ENCODE measurements at regions of chr2 and their contacts with region 1.

Region 1: DNA sequence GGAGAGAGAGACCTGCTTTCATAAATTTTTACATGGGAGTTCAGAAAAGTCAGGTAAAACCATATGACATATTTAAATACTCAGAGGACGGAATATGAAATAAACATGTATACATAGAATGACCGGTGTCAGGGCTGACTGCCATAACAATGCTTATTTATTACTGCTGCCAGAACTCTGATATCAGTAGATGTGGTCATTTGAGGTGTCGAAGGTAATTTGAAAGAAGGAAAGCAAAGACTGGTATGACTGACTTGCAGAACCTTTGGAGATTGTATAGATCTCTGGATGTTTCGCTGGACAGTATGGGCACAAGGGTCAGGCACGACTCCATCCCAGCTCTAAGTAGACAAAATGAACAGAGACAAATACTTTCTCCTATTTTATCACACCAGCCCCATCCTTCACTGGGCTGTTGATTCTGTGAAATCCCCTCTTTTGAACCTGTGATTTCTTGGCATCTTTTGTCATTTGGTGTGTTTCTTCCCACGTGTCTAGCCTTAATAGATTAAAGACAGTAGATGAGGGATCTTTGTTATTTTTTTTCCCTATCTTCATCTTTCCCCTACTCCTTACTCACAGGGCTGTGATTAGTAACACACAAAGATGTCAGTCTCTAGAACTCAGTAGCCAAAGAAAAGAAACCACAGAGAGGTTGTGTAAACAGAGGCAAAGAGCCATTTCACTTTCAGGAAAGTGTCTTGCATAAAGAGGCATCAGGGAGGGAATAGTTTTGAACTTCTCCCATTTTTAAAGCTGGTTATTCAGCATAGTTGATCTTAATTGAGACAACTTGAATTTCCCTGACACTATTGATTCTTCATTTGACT is 61.6 kb downstream of the ICOS start:
- DNase-seq: peak; percentile 57
- H3K4me3 Mint-ChIP-seq: peak overlapping the region; percentile 55
- H3K27ac Mint-ChIP-seq: peak overlapping the region; percentile 69
- H3K4me1 Mint-ChIP-seq: peaks cover 72% of the 10 kb centered on the region
- H3K27me3 Mint-ChIP-seq: no peaks in the 10 kb centered on the region

Region 2: GRCh38 chr2:203718087-203718486 is 280.1 kb before region 1 on chr2:
- intact Hi-C with region 1: loop called (anchors 5 kb)
- DNase-seq: peak; percentile 92
- H3K4me3 Mint-ChIP-seq: peak overlapping the region; percentile 66
- H3K27ac Mint-ChIP-seq: peak overlapping the region; percentile 99
- H3K4me1 Mint-ChIP-seq: peaks cover 91% of the 10 kb centered on the region
- H3K27me3 Mint-ChIP-seq: no peaks in the 10 kb centered on the region

Region 3: GRCh38 chr2:203730076-203730729 is 268.0 kb before region 1 on chr2:
- intact Hi-C with region 1: loop called (anchors 5 kb)
- DNase-seq: peak; percentile 71
- H3K4me3 Mint-ChIP-seq: peak overlapping the region; percentile 71
- H3K27ac Mint-ChIP-seq: peak overlapping the region; percentile 96
- H3K4me1 Mint-ChIP-seq: peaks cover 79% of the 10 kb centered on the region
- H3K27me3 Mint-ChIP-seq: no peaks in the 10 kb centered on the region

Region 4: DNA sequence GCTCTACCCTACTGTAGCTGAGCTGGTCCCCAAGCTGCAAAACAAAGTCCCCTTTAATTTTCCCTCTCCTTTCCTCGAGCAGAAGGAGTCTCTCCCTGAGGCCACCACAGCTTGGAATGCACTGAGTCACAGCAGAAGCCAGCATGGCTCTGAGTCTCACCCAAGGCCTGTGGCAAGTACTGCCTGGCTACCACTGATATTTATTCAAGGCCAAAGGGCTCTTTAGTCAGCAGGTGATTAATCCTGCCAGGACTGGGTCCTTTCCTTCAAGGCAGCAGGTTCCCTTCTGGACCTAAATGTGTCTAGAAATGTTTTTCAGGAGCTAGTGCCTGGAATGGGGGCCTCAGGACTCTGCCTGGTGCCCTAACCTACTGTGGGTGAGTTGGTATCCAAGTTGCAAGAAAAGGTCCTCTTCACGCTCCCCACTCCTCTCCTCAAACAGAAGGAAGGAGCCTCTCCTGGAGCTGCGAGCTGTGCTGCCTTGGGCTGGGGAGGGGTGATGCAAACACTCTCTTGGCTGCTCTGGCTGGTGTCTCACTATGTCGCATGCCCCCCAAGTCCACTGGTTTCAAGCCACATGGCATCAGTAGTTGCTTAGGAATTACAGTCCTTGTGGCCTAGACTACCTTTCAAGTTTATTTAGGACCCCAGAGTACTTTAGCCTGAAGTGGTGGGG is 238.4 kb before region 1 on chr2:
- intact Hi-C with region 1: no loop called
- DNase-seq: peak; percentile 45
- H3K4me3 Mint-ChIP-seq: no peak overlapping the region
- H3K27ac Mint-ChIP-seq: peak overlapping the region; percentile 32
- H3K4me1 Mint-ChIP-seq: peaks cover 51% of the 10 kb centered on the region
- H3K27me3 Mint-ChIP-seq: no peaks in the 10 kb centered on the region

Region 5: GRCh38 chr2:203887677-203888076 is 110.5 kb before region 1 on chr2:
- intact Hi-C with region 1: loop called (anchors 2 kb)
- DNase-seq: no peak
- H3K4me3 Mint-ChIP-seq: no peak overlapping the region
- H3K27ac Mint-ChIP-seq: no peak overlapping the region
- H3K4me1 Mint-ChIP-seq: peaks cover 51% of the 10 kb centered on the region
- H3K27me3 Mint-ChIP-seq: no peaks in the 10 kb centered on the region

Region 6: DNA sequence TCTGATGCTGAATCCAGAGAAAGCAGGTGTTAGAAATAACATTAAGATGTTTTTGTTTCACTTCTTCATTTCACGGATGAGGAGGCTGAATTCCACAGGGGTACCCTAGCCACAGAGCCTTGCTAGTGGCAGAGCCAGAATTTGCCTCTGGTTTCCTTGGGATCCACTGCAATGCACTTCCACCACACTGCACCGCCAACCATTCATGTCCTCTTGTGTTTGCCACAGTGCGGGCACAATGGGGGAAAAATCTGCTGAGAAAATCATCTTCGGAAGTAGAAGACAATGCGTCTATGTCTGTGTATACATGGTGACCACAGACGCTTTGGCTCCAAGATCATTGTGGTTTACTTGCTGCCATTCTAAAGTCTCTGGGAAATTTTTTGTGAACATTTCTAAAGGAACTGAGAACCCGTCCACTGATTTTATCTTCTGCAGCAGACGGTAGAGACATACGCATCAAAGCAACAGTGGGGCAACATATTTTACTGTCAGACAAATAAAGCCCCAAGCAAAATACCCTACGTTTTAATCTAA is 46.8 kb before region 1 on chr2:
- intact Hi-C with region 1: loop called (anchors 1 kb)
- DNase-seq: peak; percentile 84
- H3K4me3 Mint-ChIP-seq: peak overlapping the region; percentile 69
- H3K27ac Mint-ChIP-seq: peak overlapping the region; percentile 84
- H3K4me1 Mint-ChIP-seq: peaks cover 70% of the 10 kb centered on the region
- H3K27me3 Mint-ChIP-seq: no peaks in the 10 kb centered on the region

Region 7: GRCh38 chr2:203972066-203972465 is 26.1 kb before region 1 on chr2:
- intact Hi-C with region 1: loop called (anchors 1 kb)
- DNase-seq: no peak
- H3K4me3 Mint-ChIP-seq: no peak overlapping the region
- H3K27ac Mint-ChIP-seq: no peak overlapping the region
- H3K4me1 Mint-ChIP-seq: peaks cover 13% of the 10 kb centered on the region
- H3K27me3 Mint-ChIP-seq: no peaks in the 10 kb centered on the region

Region 8: DNA sequence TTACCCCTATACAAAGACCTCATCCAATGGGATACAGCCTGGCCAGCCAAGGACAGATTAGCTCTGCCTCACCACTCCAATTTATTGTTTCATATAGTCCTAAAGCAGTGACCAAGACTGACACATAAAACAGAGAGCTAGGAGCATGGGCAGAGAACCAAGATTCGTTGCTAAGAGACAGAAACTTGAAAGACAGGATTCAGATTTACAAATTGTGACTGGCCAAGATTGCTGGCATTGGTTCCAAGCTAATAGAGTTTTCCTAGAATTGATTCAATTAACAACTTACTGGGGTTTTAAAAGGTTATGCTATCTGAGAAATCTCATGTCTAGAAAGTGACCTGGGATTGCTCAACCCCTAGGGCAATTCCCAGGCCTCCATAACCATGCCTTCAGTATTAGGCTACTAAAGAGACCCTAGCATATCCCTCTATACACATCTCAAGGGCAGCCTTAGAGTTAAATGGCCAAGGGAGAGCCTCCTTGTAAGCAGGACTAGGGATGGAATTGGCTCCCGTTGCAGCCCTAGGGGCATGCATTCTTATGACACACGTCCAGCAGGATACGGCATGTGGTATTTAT is 14.0 kb after region 1 on chr2:
- intact Hi-C with region 1: no loop called
- DNase-seq: no peak
- H3K4me3 Mint-ChIP-seq: no peak overlapping the region
- H3K27ac Mint-ChIP-seq: no peak overlapping the region
- H3K4me1 Mint-ChIP-seq: peaks cover 45% of the 10 kb centered on the region
- H3K27me3 Mint-ChIP-seq: no peaks in the 10 kb centered on the region

Region 9: DNA sequence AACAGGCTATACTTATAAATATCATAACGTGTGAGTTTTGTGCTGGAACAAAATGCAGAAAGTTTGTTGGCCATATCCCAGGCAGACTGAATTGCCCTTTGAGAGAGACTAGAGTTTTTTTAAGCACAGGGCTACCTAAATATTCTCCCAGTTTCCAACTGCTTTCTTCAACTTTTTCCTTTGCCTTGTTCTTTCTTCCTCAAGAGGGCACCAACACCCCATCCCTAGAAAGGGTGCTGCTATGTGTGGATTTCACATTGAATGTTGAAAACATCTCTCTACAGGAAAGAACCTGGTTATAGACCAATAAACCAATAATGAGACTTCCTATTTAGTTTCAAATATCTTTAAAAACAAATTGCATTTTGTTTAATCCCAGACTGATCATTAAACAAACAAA is 26.3 kb after region 1 on chr2:
- intact Hi-C with region 1: loop called (anchors 1 kb)
- DNase-seq: peak; percentile 78
- H3K4me3 Mint-ChIP-seq: no peak overlapping the region
- H3K27ac Mint-ChIP-seq: no peak overlapping the region
- H3K4me1 Mint-ChIP-seq: peaks cover 51% of the 10 kb centered on the region
- H3K27me3 Mint-ChIP-seq: no peaks in the 10 kb centered on the region

Region 10: GRCh38 chr2:204325468-204325867 is 327.3 kb after region 1 on chr2:
- intact Hi-C with region 1: no loop called
- DNase-seq: peak; percentile 90
- H3K4me3 Mint-ChIP-seq: no peak overlapping the region
- H3K27ac Mint-ChIP-seq: no peak overlapping the region
- H3K4me1 Mint-ChIP-seq: peaks cover 5% of the 10 kb centered on the region
- H3K27me3 Mint-ChIP-seq: peaks cover 6% of the 10 kb centered on the region